Naive thymus-derived CD4-positive, alpha-beta T cell (primary cell): ENCODE measurements at regions of chr13 and their contacts with region 1.

Region 1: GRCh38 chr13:49171358-49171757 is 48.8 kb upstream of the MLNR start:
- DNase-seq: no peak
- ATAC-seq: no peak
- H3K4me3 ChIP-seq: no peak overlapping the region
- H3K4me3 Mint-ChIP-seq: no peak overlapping the region
- H3K27ac ChIP-seq: no peak overlapping the region
- H3K27ac Mint-ChIP-seq: no peak overlapping the region
- H3K4me1 ChIP-seq: no peaks in the 10 kb centered on the region
- H3K4me1 Mint-ChIP-seq: peaks cover 0 to 10% (median 3%) of the 10 kb centered on the region in 7 donors
- H3K27me3 ChIP-seq: no peaks in the 10 kb centered on the region
- H3K27me3 Mint-ChIP-seq: no peaks in the 10 kb centered on the region

Region 2: GRCh38 chr13:48636550-48636949 is 534.8 kb before region 1 on chr13:
- CTCF ChIA-PET with region 1: no interaction called
- POLR2A ChIA-PET with region 1: no interaction called
- intact Hi-C with region 1: no loop called
- DNase-seq: no peak
- ATAC-seq: no peak
- H3K4me3 ChIP-seq: no peak overlapping the region
- H3K4me3 Mint-ChIP-seq: no peak overlapping the region
- H3K27ac ChIP-seq: no peak overlapping the region
- H3K27ac Mint-ChIP-seq: peak overlapping the region in 1 of 9 donors; percentile 61
- H3K4me1 ChIP-seq: peaks cover 0 to 4% of the 10 kb centered on the region in 2 donors
- H3K4me1 Mint-ChIP-seq: peaks cover 0 to 16% (median 6%) of the 10 kb centered on the region in 7 donors
- H3K27me3 ChIP-seq: no peaks in the 10 kb centered on the region
- H3K27me3 Mint-ChIP-seq: peaks cover 0 to 7% (median 4%) of the 10 kb centered on the region in 5 donors

Region 3: GRCh38 chr13:48804821-48805601 is 366.3 kb before region 1 on chr13:
- CTCF ChIA-PET with region 1: no interaction called
- POLR2A ChIA-PET with region 1: no interaction called
- intact Hi-C with region 1: no loop called
- DNase-seq: peak in 1 of 9 donors; percentile 10
- ATAC-seq: no peak
- H3K4me3 ChIP-seq: no peak overlapping the region
- H3K4me3 Mint-ChIP-seq: peak overlapping the region in 8 of 10 donors; percentile 2 to 54 (median 10)
- H3K27ac ChIP-seq: peak overlapping the region; percentile 9
- H3K27ac Mint-ChIP-seq: peak overlapping the region in 8 of 9 donors; percentile 0 to 84 (median 58)
- H3K4me1 ChIP-seq: peaks cover 8 to 20% of the 10 kb centered on the region in 2 donors
- H3K4me1 Mint-ChIP-seq: peaks cover 15 to 32% (median 23%) of the 10 kb centered on the region in 7 donors
- H3K27me3 ChIP-seq: no peaks in the 10 kb centered on the region
- H3K27me3 Mint-ChIP-seq: peaks cover 0 to 2% (median 0%) of the 10 kb centered on the region in 5 donors

Region 4: DNA sequence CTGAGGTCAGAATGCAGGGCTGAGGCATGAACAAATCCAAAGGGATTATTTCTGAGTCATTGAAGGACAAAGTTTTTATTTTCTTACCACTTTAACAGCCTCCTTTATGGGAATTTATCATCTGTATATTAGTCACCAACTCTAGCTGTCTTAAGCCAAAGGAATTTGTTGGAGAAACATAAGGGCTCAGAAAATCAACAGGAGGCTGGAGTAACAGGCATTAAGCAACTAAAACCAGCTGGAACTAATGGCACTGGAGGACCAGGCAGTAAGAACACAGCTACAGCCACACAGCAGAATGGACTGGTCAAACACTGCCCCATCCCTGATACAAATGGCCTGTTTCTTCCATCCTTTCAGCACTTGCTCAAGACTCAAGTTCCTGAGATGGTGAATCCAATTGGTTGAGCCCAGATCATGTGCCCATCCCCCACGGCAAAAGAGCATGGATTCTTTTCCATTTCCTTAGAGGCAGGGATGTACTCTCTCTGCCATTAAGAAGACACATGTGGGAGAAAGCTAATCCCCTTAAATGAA is 352.8 kb before region 1 on chr13:
- CTCF ChIA-PET with region 1: no interaction called
- POLR2A ChIA-PET with region 1: no interaction called
- intact Hi-C with region 1: no loop called
- DNase-seq: no peak
- ATAC-seq: no peak
- H3K4me3 ChIP-seq: no peak overlapping the region
- H3K4me3 Mint-ChIP-seq: peak overlapping the region in 2 of 10 donors; percentile 7 to 83
- H3K27ac ChIP-seq: no peak overlapping the region
- H3K27ac Mint-ChIP-seq: peak overlapping the region in 1 of 9 donors; percentile 66
- H3K4me1 ChIP-seq: peaks cover 0 to 12% of the 10 kb centered on the region in 2 donors
- H3K4me1 Mint-ChIP-seq: peaks cover 12 to 19% (median 15%) of the 10 kb centered on the region in 7 donors
- H3K27me3 ChIP-seq: no peaks in the 10 kb centered on the region
- H3K27me3 Mint-ChIP-seq: peaks cover 0 to 4% (median 0%) of the 10 kb centered on the region in 5 donors

Region 5: GRCh38 chr13:49183672-49184325 is 12.4 kb after region 1 on chr13:
- CTCF ChIA-PET with region 1: no interaction called
- POLR2A ChIA-PET with region 1: no interaction called
- intact Hi-C with region 1: loop called in 1 of 2 experiments (anchors 1 kb)
- DNase-seq: no peak
- ATAC-seq: no peak
- H3K4me3 ChIP-seq: no peak overlapping the region
- H3K4me3 Mint-ChIP-seq: no peak overlapping the region
- H3K27ac ChIP-seq: no peak overlapping the region
- H3K27ac Mint-ChIP-seq: no peak overlapping the region
- H3K4me1 ChIP-seq: no peaks in the 10 kb centered on the region
- H3K4me1 Mint-ChIP-seq: peaks cover 0 to 16% (median 0%) of the 10 kb centered on the region in 7 donors
- H3K27me3 ChIP-seq: no peaks in the 10 kb centered on the region
- H3K27me3 Mint-ChIP-seq: no peaks in the 10 kb centered on the region